ENCODE measurements at regions of chr5 and their contacts with region 1.

Region 1: DNA sequence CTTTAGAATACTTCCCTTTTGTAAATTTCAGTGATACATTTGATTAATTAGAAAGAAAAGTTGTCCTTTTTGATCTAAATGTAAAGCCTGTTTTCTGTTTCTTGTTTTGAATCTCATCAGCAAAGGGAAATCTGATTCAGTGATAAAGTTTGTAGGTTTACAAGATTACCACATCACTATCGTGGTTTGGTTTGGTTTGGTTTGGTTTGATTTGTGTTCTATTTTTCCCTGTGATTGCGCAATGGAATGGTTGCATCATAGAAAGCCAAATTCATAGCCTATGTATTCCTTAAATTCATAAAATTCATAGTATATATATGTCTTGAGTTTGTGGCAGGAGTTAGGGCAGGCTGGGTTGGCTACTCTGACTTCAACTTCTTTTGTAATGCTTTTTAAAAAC is 15.2 kb downstream of the SRFBP1 start:
- DNase-seq: no peak
- H3K4me3 ChIP-seq: no peak overlapping the region
- H3K27ac ChIP-seq: no peak overlapping the region
- H3K4me1 ChIP-seq: peaks cover 2 to 3% of the 10 kb centered on the region in 2 donors
- H3K27me3 ChIP-seq: no peaks in the 10 kb centered on the region
- CTCF ChIP-seq: no peak
- POLR2A ChIP-seq: no peak

Region 2: DNA sequence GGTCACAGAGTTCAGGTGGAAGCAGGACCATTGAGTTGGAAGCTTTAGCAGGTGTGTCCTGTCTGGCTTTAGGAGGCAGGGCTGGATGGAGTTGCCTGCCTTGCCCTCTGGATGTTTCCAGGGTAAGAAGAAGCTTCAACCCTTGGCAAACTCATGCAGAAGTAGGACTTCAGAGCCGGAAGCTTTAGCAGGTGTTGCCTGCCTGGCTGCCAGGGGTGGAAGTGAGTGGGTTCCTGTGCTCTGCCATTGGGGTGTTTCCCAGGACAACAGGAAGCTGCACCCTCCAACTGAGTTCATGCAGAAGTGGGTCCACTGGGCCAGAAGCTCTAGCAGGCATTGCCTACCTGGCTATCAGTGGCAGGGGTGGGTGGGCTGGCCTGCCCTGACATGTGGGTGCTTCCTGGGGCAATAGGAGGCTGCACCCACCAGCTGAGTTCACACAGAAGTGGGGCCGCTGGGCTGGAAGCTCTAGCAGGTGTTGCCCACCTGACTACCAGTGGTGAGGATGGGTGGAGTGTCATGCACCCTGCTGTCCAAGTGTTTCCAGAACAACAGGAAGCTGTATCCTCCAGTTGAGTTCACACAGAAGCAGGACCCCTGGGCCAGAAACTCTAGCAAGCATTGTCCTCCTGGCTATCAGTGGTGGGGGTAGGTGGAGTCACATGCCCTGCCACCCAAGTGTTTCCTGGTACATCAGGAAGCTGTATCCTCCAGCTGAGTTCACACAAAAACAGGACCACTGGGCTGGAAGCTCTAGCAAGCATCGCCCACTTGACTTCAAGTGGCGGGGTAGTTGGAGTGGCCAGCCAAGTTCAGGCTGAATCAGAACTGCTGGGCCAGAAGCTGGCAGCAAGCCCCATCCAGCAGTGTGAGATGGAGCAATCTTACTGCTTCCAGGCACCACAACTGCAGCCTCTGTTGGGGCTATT is 76.5 kb after region 1 on chr5:
- intact Hi-C with region 1: no loop called
- DNase-seq: peak in 2 of 7 donors; percentile 5 to 12
- H3K4me3 ChIP-seq: no peak overlapping the region
- H3K27ac ChIP-seq: no peak overlapping the region
- H3K4me1 ChIP-seq: no peaks in the 10 kb centered on the region
- H3K27me3 ChIP-seq: no peaks in the 10 kb centered on the region
- CTCF ChIP-seq: no peak
- POLR2A ChIP-seq: no peak

Region 3: GRCh38 chr5:122076664-122077365 is 99.8 kb after region 1 on chr5:
- intact Hi-C with region 1: loop called in 1 of 2 experiments (anchors 10 kb)
- DNase-seq: peak; percentile 58 to 80 (median 72)
- H3K4me3 ChIP-seq: peak overlapping the region in 2 of 4 donors; percentile 31 to 53
- H3K27ac ChIP-seq: peak overlapping the region in 1 of 5 donors; percentile 79
- H3K4me1 ChIP-seq: peaks cover 10 to 25% of the 10 kb centered on the region in 2 donors
- H3K27me3 ChIP-seq: no peaks in the 10 kb centered on the region
- CTCF ChIP-seq: peak; percentile 28 to 64 (median 52)
- POLR2A ChIP-seq: no peak

Measured in adrenal gland (tissue), 19 donors.